Common myeloid progenitor, CD34-positive (primary cell): ENCODE measurements at regions of chr5 and their contacts with region 1.

Region 1: DNA sequence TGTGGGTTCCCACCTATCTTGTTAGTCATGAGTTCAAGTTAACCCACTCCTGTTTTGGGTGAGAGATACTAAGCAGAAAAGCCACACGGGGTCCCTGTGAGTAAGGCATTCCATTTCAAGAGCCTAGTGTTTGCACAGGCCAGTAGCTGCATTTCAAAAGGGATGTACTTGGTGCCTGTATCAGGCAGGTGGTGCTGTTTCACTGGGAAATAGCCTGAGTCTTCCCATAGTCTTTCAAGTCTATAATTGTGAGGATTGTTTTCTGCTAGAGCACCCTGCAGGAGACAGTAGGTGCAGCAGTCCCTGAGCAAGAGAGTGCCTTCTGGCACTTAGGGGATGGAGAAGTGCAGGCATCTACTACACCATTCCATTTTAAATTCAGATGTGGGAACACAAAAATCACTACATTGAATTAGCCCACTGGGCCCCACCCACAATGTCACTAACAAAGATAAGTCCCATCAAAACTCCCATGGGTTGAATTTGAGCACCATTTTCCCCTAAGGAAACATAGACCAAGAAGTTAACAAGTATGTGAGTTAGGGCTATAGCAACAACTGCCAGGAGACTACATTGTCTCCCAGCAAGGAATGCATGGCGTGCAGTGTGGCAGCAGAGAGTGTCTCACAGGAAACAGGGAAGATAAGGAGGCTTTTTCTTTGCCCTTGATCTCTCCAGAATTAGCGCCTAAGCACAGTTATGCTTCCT is 263.2 kb downstream of the COX7C start:
- DNase-seq: peak; percentile 71 to 84 (median 82)
- H3K4me3 ChIP-seq: no peak overlapping the region
- H3K27ac ChIP-seq: no peak overlapping the region
- H3K4me1 ChIP-seq: no peaks in the 10 kb centered on the region
- H3K27me3 ChIP-seq: peaks cover 0 to 4% (median 0%) of the 10 kb centered on the region in 5 experiments

Region 2: GRCh38 chr5:86968301-86968753 is 87.4 kb after region 1 on chr5:
- CTCF ChIA-PET with region 1: interaction called, 14 read pairs
- POLR2A ChIA-PET with region 1: no interaction called
- DNase-seq: peak; percentile 25 to 50 (median 49)
- H3K4me3 ChIP-seq: no peak overlapping the region
- H3K27ac ChIP-seq: no peak overlapping the region
- H3K4me1 ChIP-seq: no peaks in the 10 kb centered on the region
- H3K27me3 ChIP-seq: peaks cover 0 to 2% (median 0%) of the 10 kb centered on the region in 5 experiments